ENCODE measurements at regions of chr3 and their contacts with region 1.

Region 1: DNA sequence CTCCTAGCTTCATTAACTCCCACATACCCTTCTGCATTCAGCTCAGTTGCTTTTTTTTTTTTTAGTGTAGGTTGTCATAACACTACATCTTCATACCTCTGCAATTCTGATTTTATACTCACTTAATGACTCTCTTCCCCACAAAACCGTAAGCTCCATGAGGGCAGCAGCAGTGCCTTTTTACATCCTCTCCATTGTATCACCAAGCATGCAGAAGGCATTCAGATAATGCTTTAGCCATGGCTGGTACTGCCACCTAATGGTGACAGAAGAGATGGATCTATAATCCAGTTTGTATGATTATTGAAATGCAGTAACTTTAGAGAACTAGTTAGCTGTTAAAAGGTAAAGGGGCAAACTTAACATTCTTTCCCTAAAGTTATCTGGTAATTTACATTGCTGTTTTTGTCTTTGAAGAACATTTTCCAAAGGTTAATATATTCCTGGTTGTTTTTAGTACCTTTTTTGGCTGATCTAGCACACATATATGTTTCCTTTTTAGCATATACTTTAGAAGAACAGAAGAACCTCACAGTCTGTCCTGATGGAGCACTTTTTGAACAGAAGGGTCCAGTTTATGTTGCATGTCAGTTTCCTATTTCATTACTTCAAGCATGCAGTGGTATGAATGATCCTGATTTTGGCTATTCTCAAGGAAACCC is 36.8 kb downstream of the ATP1B3 start:
- DNase-seq: peak; percentile 62
- ATAC-seq: peak; percentile 64
- H3K4me3 ChIP-seq: no peak overlapping the region
- H3K27ac ChIP-seq: no peak overlapping the region
- H3K4me1 ChIP-seq: peaks cover 2% of the 10 kb centered on the region
- H3K27me3 ChIP-seq: no peaks in the 10 kb centered on the region
- CTCF ChIP-seq: peak; percentile 61
- POLR2A ChIP-seq: no peak
- RAD21 ChIP-seq: peak; percentile 76

Region 2: DNA sequence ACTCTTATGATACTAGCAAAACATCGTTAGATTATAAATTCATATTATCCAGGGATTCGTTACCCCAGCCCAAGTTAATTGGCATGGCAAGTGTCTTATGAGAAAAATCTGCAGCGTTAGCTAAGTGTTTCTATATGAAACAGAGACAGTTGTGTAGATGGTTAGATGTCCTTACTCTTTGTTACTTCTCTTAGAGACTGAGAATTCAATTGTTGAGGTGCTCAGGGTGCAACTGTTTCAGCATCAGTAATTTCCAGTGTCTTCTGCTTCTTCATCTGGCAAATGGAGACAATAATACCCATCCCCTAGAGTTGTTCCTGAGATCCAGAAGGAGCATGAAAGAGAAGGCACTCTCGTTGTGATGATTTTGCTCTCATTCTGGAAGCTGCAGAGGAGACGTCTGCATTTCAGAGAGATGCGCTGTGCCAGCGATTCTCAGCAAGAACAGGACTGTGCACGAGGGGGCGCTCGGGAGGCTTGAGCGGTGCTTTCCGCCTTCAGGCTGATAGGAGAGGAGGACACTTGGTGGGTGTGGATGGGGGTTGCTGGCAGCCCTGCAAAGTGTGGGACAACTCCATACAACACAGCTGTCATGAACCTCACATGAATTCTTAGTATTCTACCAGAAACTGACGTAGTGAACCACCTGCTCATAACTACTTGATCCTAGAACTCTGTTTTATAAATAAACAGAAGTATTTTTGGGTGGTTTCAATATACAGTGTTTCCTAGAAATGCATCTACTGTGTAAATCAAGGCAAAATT is 901.9 kb before region 1 on chr3:
- CTCF ChIA-PET with region 1: no interaction called
- POLR2A ChIA-PET with region 1: no interaction called
- dilution Hi-C with region 1: no loop called
- in situ Hi-C with region 1: no loop called
- intact Hi-C with region 1: no loop called
- DNase-seq: peak; percentile 44
- ATAC-seq: peak; percentile 95
- H3K4me3 ChIP-seq: no peak overlapping the region
- H3K27ac ChIP-seq: no peak overlapping the region
- H3K4me1 ChIP-seq: no peaks in the 10 kb centered on the region
- H3K27me3 ChIP-seq: peaks cover 7% of the 10 kb centered on the region
- CTCF ChIP-seq: peak; percentile 74
- POLR2A ChIP-seq: no peak
- RAD21 ChIP-seq: peak; percentile 59

Region 3: GRCh38 chr3:141575879-141576743 is 337.2 kb before region 1 on chr3:
- CTCF ChIA-PET with region 1: interaction called, 4 read pairs
- POLR2A ChIA-PET with region 1: no interaction called
- dilution Hi-C with region 1: no loop called
- in situ Hi-C with region 1: no loop called
- intact Hi-C with region 1: loop called (anchors 5 kb)
- DNase-seq: peak; percentile 40
- ATAC-seq: peak; percentile 79
- H3K4me3 ChIP-seq: no peak overlapping the region
- H3K27ac ChIP-seq: no peak overlapping the region
- H3K4me1 ChIP-seq: peaks cover 2% of the 10 kb centered on the region; the same call in 1 of the 2 replicates
- H3K27me3 ChIP-seq: no peaks in the 10 kb centered on the region
- CTCF ChIP-seq: peak; percentile 55
- POLR2A ChIP-seq: no peak
- RAD21 ChIP-seq: peak; percentile 56

Region 4: GRCh38 chr3:141597931-141598330 is 315.4 kb before region 1 on chr3:
- CTCF ChIA-PET with region 1: no interaction called
- POLR2A ChIA-PET with region 1: no interaction called
- dilution Hi-C with region 1: no loop called
- in situ Hi-C with region 1: loop called (anchors 10 kb)
- intact Hi-C with region 1: no loop called
- DNase-seq: no peak
- ATAC-seq: no peak
- H3K4me3 ChIP-seq: no peak overlapping the region
- H3K27ac ChIP-seq: no peak overlapping the region
- H3K4me1 ChIP-seq: no peaks in the 10 kb centered on the region
- H3K27me3 ChIP-seq: no peaks in the 10 kb centered on the region
- CTCF ChIP-seq: no peak
- POLR2A ChIP-seq: no peak
- RAD21 ChIP-seq: no peak

Region 5: DNA sequence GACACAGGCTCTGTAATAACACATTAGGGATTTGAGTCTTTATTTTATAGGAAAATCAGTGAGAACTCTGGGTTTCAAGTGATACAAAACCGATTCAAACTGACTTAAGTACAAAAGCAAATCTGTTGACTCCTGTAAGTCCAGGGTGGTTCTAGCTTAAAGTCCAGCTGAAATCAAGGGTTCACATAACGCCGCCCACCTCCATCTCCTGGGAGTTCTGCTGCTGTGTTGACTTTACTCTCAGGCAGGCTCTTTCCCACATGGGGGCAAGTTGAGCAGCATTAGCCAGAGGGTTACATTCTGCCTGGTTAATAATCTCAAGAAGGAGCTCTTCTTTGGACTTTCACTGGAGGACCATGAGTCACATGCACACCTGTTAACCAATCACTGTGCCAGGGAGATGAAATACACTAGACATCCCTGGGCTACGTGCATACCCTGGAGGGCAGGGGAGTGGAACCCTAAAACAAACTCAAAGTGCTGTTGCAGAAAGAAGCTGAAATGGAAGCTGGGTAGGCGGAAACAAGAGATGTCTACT is 184.9 kb before region 1 on chr3:
- CTCF ChIA-PET with region 1: no interaction called
- POLR2A ChIA-PET with region 1: no interaction called
- dilution Hi-C with region 1: no loop called
- in situ Hi-C with region 1: no loop called
- intact Hi-C with region 1: no loop called
- DNase-seq: no peak
- ATAC-seq: no peak
- H3K4me3 ChIP-seq: no peak overlapping the region
- H3K27ac ChIP-seq: no peak overlapping the region
- H3K4me1 ChIP-seq: peaks cover 3% of the 10 kb centered on the region; the same call in 1 of the 2 replicates
- H3K27me3 ChIP-seq: no peaks in the 10 kb centered on the region
- CTCF ChIP-seq: no peak
- POLR2A ChIP-seq: no peak
- RAD21 ChIP-seq: no peak